Naive thymus-derived CD8-positive, alpha-beta T cell (primary cell): ENCODE measurements at regions of chr2 and their contacts with region 1.

Region 1: GRCh38 chr2:25376750-25377621 is 35.3 kb upstream of the DNMT3A start:
- DNase-seq: peak; percentile 87 to 95 (median 91)
- ATAC-seq: peak; percentile 98 to 99
- H3K4me3 Mint-ChIP-seq: peak overlapping the region; percentile 69 to 85 (median 80)
- H3K27ac Mint-ChIP-seq: peak overlapping the region; percentile 92 to 98 (median 94)
- H3K4me1 Mint-ChIP-seq: peaks cover 17 to 43% (median 39%) of the 10 kb centered on the region in 4 donors
- H3K27me3 Mint-ChIP-seq: no peaks in the 10 kb centered on the region

Region 2: GRCh38 chr2:25362049-25362433 is 14.9 kb before region 1 on chr2:
- POLR2A ChIA-PET with region 1: interaction called, 35 read pairs
- DNase-seq: peak; percentile 85 to 99 (median 93)
- ATAC-seq: peak; percentile 89 to 97
- H3K4me3 Mint-ChIP-seq: peak overlapping the region; percentile 89 to 99 (median 94)
- H3K27ac Mint-ChIP-seq: peak overlapping the region; percentile 85 to 100 (median 94)
- H3K4me1 Mint-ChIP-seq: peaks cover 11 to 21% (median 19%) of the 10 kb centered on the region in 4 donors
- H3K27me3 Mint-ChIP-seq: no peaks in the 10 kb centered on the region